ENCODE measurements at regions of chr18 and their contacts with region 1.

Region 1: DNA sequence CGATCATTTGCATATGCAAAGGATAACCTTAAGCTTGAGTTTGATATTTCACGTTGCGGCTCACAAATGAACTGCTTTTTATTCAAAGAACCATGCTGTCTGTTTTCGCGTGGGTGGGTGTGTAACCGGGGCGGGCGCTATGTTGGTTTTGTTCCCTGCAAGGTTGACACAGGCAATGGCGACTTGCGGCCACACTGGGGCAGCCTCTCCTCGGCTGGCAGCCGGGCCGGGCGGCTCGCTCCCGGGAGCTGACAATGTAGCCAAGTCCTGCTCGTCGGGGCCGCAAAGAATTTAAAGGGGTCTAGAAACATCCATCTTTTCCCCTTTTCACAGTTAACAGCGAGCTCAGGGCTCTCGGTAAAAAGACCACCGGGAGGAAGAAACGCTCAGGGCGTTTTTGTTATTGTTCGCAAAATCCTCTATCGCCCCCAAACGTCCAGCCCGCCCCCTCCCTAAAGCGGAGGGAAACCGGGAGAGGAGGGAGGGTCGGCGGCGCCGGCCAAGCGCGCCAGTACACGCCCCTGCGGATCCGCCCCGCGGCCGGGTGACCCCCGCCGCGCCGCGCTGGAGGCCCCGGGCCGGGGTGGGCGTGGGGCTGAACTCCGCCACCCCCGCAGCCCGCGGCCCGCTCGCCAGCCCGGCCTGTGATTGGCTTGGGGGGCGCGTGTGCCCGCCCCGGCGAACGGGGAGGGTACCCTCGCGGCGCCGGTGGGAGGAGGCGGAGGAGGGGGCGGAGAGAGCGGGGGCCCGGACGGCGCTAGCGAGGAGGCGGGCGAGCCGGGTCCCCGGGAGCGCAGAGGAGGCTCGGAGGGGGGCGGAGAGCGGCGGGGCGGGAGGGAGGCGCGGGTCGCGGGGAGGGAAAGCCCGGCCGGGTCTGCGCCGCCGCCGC is at the start of gene NEDD4L:
- DNase-seq: peak; percentile 56 to 83
- ATAC-seq: peak; percentile 78 to 88 (median 79)
- H3K4me3 ChIP-seq: peak within 1 kb of the TSS; percentile 69
- H3K4me3 Mint-ChIP-seq: peak within 1 kb of the TSS; percentile 95
- H3K27ac ChIP-seq: peak within 1 kb of the TSS; percentile 48
- H3K27ac Mint-ChIP-seq: peak within 1 kb of the TSS; percentile 38 to 64
- H3K4me1 ChIP-seq: peaks cover 14% of the 10 kb centered on the region
- H3K4me1 Mint-ChIP-seq: peaks cover 20 to 30% of the 10 kb centered on the region in 2 donors
- H3K27me3 ChIP-seq: no peaks in the 10 kb centered on the region
- H3K27me3 Mint-ChIP-seq: peaks cover 13 to 19% of the 10 kb centered on the region in 2 donors
- CTCF ChIP-seq: peak; percentile 73
- total RNA-seq, gene NEDD4L: 3.4 to 15.3 (median 14.3) TPM

Region 2: GRCh38 chr18:58117786-58118403 is 74.2 kb after region 1 on chr18:
- intact Hi-C with region 1: loop called (anchors 1 kb)
- DNase-seq: no peak
- ATAC-seq: no peak
- H3K4me3 ChIP-seq: no peak overlapping the region
- H3K4me3 Mint-ChIP-seq: no peak overlapping the region
- H3K27ac ChIP-seq: no peak overlapping the region
- H3K27ac Mint-ChIP-seq: no peak overlapping the region
- H3K4me1 ChIP-seq: no peaks in the 10 kb centered on the region
- H3K4me1 Mint-ChIP-seq: peaks cover 5% of the 10 kb centered on the region in 2 donors
- H3K27me3 ChIP-seq: no peaks in the 10 kb centered on the region
- H3K27me3 Mint-ChIP-seq: no peaks in the 10 kb centered on the region
- CTCF ChIP-seq: no peak

Region 3: DNA sequence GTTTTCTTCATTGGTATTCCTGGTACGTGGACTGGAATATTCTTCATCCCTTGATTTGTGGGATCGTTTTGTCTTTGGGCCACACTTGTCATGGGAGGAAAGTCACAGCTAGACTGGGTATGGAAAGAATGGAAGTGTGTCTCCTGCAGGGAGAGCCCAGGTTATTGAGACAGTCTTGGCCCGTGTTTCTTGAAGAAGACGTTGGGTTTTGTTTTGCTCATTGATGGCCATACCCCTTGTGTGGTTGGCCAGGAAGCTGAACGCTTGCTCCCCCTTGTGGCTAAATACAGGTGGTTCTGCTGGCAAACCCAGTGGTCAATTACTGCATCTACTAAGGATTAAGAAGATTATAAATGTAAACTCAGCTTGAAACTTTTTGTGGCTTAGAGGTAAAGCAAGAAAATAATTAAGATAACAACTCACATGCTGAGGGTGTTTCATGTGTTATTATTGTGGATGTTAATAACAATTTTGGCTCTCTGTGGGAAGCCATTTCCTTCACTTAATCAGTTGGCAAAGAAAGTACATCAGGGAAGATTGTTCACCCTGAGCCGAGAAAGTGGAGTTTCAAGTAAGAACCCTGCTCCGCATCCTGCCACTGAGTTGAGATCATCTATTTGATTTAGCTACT is 92.1 kb after region 1 on chr18:
- intact Hi-C with region 1: loop called (anchors 5 kb)
- DNase-seq: peak; percentile 22 to 70
- ATAC-seq: peak; percentile 63 to 84 (median 76)
- H3K4me3 ChIP-seq: no peak overlapping the region
- H3K4me3 Mint-ChIP-seq: peak overlapping the region; percentile 13
- H3K27ac ChIP-seq: no peak overlapping the region
- H3K27ac Mint-ChIP-seq: no peak overlapping the region
- H3K4me1 ChIP-seq: peaks cover 10% of the 10 kb centered on the region
- H3K4me1 Mint-ChIP-seq: peaks cover 12 to 15% of the 10 kb centered on the region in 2 donors
- H3K27me3 ChIP-seq: no peaks in the 10 kb centered on the region
- H3K27me3 Mint-ChIP-seq: peaks cover 7 to 19% of the 10 kb centered on the region in 2 donors
- CTCF ChIP-seq: peak; percentile 55

Region 4: DNA sequence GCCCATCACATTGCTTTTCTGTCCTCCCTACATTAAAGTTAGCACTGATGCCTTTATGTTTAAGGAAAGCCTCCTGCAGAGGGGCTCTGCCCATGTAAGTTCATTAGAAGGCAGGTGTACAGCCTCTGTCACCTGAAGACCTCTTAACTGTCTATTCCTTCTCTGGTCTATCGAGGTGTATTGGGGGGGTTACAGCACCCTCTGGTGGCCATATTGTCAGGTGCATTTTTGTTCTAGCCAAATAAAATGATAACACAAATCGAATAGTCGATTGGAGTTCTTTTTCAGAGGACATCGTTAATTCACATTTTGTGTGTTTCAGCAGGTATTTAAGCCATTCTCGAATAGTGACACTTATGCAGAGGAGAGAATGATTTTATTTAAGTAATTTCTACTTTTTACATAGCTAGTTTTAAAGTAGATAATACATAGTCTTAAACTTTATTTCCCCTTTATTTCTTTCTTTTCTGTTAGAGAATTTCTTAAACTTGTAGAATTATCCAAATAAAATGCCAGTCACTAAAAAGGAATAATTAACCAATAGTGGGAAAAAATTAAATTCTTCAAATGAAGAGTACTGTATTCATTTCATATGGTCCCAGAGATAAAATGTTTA is 137.1 kb after region 1 on chr18:
- intact Hi-C with region 1: loop called (anchors 1 kb)
- DNase-seq: peak; percentile 34 to 78
- ATAC-seq: peak in 1 of 3 donors; percentile 72
- H3K4me3 ChIP-seq: no peak overlapping the region
- H3K4me3 Mint-ChIP-seq: no peak overlapping the region
- H3K27ac ChIP-seq: no peak overlapping the region
- H3K27ac Mint-ChIP-seq: no peak overlapping the region
- H3K4me1 ChIP-seq: no peaks in the 10 kb centered on the region
- H3K4me1 Mint-ChIP-seq: no peaks in the 10 kb centered on the region
- H3K27me3 ChIP-seq: no peaks in the 10 kb centered on the region
- H3K27me3 Mint-ChIP-seq: peaks cover 5 to 8% of the 10 kb centered on the region in 2 donors
- CTCF ChIP-seq: peak; percentile 83